CD8-positive, alpha-beta T cell (primary cell): ENCODE measurements at regions of chr1 and their contacts with region 1.

Region 1: GRCh38 chr1:114511032-114511785 is at the start of gene TRIM33:
- DNase-seq: peak; percentile 84 to 98 (median 91)
- ATAC-seq: peak; percentile 80
- H3K4me3 ChIP-seq: peak within 1 kb of the TSS; percentile 78 to 96
- H3K4me3 Mint-ChIP-seq: peak within 1 kb of the TSS; percentile 96
- H3K27ac ChIP-seq: peak within 1 kb of the TSS; percentile 93 to 100
- H3K27ac Mint-ChIP-seq: peak within 1 kb of the TSS; percentile 99
- H3K4me1 ChIP-seq: peaks cover 40% of the 10 kb centered on the region
- H3K4me1 Mint-ChIP-seq: peaks cover 54% of the 10 kb centered on the region
- H3K27me3 ChIP-seq: no peaks in the 10 kb centered on the region
- H3K27me3 Mint-ChIP-seq: no peaks in the 10 kb centered on the region
- CTCF ChIP-seq: no peak
- total RNA-seq, gene TRIM33: 50.4 to 50.7 TPM

Region 2: DNA sequence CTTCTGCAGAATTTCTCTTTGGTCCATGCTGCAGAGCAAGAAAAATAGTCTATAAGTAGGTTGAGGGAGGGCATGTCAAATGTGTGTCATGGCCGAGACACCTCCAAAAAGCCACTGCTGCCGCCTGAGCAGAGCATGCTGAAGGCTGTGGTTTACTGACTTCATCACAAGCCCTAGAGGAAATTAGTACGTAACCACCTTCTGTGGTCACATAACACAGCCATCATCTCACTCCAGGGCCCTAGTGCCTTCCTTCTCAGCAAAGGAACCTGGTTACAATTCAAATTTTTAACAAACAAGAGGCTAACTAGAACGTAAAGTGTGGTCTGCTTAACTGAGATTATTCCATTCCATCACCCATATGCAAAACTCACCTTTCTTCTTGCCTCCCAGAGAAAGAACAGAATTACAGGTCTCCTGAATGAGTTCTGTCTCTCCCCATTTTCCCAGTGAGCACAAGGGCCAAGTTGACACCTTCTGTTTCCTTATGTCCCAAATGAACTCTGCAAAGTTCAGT is 639.6 kb before region 1 on chr1 and contains the start of gene PTPN22:
- CTCF ChIA-PET with region 1: no interaction called
- POLR2A ChIA-PET with region 1: no interaction called
- intact Hi-C with region 1: loop called in 1 of 2 experiments (anchors 2 kb)
- DNase-seq: peak; percentile 64 to 96 (median 80)
- ATAC-seq: peak; percentile 84
- H3K4me3 ChIP-seq: peak within 1 kb of the TSS; percentile 53 to 66
- H3K4me3 Mint-ChIP-seq: peak within 1 kb of the TSS; percentile 83
- H3K27ac ChIP-seq: peak within 1 kb of the TSS; percentile 79 to 82
- H3K27ac Mint-ChIP-seq: peak within 1 kb of the TSS; percentile 98
- H3K4me1 ChIP-seq: peaks cover 65% of the 10 kb centered on the region
- H3K4me1 Mint-ChIP-seq: peaks cover 81% of the 10 kb centered on the region
- H3K27me3 ChIP-seq: no peaks in the 10 kb centered on the region
- H3K27me3 Mint-ChIP-seq: no peaks in the 10 kb centered on the region
- CTCF ChIP-seq: no peak
- total RNA-seq, gene PTPN22: 48.6 to 52.4 TPM

Region 3: DNA sequence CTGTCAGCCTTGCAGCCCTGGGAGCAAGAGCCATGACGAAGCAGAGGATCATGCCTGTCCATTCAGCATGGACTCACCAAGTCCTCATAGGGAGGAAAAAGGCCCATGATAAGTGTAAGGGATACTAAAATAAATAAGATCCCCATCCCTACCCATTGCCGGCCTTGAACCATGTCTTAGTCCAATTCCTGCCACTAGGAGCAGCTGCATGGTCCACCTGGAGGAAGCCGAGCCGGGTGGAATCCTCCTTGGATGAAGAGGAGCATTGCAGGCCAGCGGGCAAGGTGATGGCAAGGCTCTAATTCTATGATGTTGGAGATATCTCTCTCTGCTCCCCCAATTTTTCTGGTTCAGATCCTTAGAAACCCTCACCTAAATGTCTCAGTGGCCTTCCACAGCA is 318.9 kb before region 1 on chr1:
- CTCF ChIA-PET with region 1: no interaction called
- POLR2A ChIA-PET with region 1: no interaction called
- intact Hi-C with region 1: no loop called
- DNase-seq: no peak
- ATAC-seq: no peak
- H3K4me3 ChIP-seq: no peak overlapping the region
- H3K4me3 Mint-ChIP-seq: no peak overlapping the region
- H3K27ac ChIP-seq: no peak overlapping the region
- H3K27ac Mint-ChIP-seq: no peak overlapping the region
- H3K4me1 ChIP-seq: no peaks in the 10 kb centered on the region
- H3K4me1 Mint-ChIP-seq: peaks cover 3% of the 10 kb centered on the region
- H3K27me3 ChIP-seq: peaks cover 0 to 3% of the 10 kb centered on the region in 2 experiments
- H3K27me3 Mint-ChIP-seq: peaks cover 37% of the 10 kb centered on the region
- CTCF ChIP-seq: no peak

Region 4: GRCh38 chr1:114581335-114582287 is 70.4 kb after region 1 on chr1 and contains the start of gene BCAS2:
- CTCF ChIA-PET with region 1: no interaction called
- POLR2A ChIA-PET with region 1: interaction called, 16 read pairs
- intact Hi-C with region 1: loop called (anchors 1 kb)
- DNase-seq: peak; percentile 90 to 99 (median 95)
- ATAC-seq: peak; percentile 95
- H3K4me3 ChIP-seq: peak within 1 kb of the TSS; percentile 56 to 72
- H3K4me3 Mint-ChIP-seq: peak within 1 kb of the TSS; percentile 96
- H3K27ac ChIP-seq: peak within 1 kb of the TSS; percentile 84 to 94
- H3K27ac Mint-ChIP-seq: peak within 1 kb of the TSS; percentile 99
- H3K4me1 ChIP-seq: peaks cover 22% of the 10 kb centered on the region
- H3K4me1 Mint-ChIP-seq: peaks cover 46% of the 10 kb centered on the region
- H3K27me3 ChIP-seq: no peaks in the 10 kb centered on the region
- H3K27me3 Mint-ChIP-seq: no peaks in the 10 kb centered on the region
- CTCF ChIP-seq: no peak
- total RNA-seq, gene BCAS2: 113 to 125 TPM

Region 5: DNA sequence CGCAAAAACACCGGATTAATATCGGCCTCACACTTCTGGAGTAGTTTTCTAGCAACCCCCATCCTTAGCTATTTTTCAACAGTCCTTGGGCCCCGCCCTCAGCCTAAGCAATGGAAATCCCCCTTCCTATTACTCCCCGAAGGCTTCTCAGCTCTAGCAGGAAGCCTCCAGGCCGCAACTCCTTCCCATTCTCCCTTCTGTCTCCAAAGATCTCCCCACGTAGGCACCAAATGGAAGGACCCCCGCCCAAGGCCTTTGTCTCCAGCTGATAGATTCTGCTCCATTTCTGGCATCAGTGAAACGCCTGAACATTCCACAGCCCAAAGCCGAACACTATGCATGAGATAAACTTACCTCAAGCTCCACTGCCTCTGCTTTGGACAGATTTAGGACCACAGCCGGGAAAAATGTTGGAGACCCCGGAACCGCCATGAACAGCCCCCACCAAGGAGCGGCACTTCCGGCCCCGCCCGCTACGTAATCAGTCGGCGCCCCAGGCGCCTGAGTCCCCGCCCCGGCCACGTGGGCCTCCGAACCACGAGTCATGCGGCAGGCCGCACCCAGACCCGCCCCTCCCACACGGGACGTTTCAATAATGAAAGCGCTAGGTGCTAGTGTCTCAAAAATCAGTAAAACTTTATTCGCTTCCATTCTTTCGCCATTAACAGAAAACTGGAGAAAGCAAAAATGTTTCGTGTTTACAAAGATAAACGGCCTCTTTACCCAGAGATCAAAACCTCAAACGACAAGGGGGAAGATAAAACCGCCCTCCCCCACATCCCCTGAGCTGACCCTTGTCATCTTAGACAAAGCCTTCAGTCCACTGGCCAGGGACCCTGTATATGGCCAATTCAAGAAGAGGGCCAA is 205.3 kb after region 1 on chr1 and contains the start of gene NRAS:
- CTCF ChIA-PET with region 1: no interaction called
- POLR2A ChIA-PET with region 1: interaction called, 6 read pairs
- intact Hi-C with region 1: loop called (anchors 1 kb)
- DNase-seq: peak; percentile 91 to 97 (median 97)
- ATAC-seq: peak; percentile 94
- H3K4me3 ChIP-seq: peak within 1 kb of the TSS; percentile 84 to 87
- H3K4me3 Mint-ChIP-seq: peak within 1 kb of the TSS; percentile 97
- H3K27ac ChIP-seq: peak within 1 kb of the TSS; percentile 94 to 99
- H3K27ac Mint-ChIP-seq: peak within 1 kb of the TSS; percentile 100
- H3K4me1 ChIP-seq: peaks cover 16% of the 10 kb centered on the region
- H3K4me1 Mint-ChIP-seq: peaks cover 34% of the 10 kb centered on the region
- H3K27me3 ChIP-seq: no peaks in the 10 kb centered on the region
- H3K27me3 Mint-ChIP-seq: no peaks in the 10 kb centered on the region
- CTCF ChIP-seq: no peak
- total RNA-seq, gene NRAS: 46.0 to 46.4 TPM

Region 6: GRCh38 chr1:114780344-114781226 is 269.4 kb after region 1 on chr1 and contains the start of gene SIKE1:
- CTCF ChIA-PET with region 1: no interaction called
- POLR2A ChIA-PET with region 1: no interaction called
- intact Hi-C with region 1: loop called in 1 of 2 experiments (anchors 2 kb)
- DNase-seq: peak; percentile 87 to 98 (median 94)
- ATAC-seq: peak; percentile 97
- H3K4me3 ChIP-seq: peak within 1 kb of the TSS; percentile 86 to 92
- H3K4me3 Mint-ChIP-seq: peak within 1 kb of the TSS; percentile 100
- H3K27ac ChIP-seq: peak within 1 kb of the TSS; percentile 91 to 93
- H3K27ac Mint-ChIP-seq: peak within 1 kb of the TSS; percentile 99
- H3K4me1 ChIP-seq: peaks cover 15% of the 10 kb centered on the region
- H3K4me1 Mint-ChIP-seq: peaks cover 35% of the 10 kb centered on the region
- H3K27me3 ChIP-seq: no peaks in the 10 kb centered on the region
- H3K27me3 Mint-ChIP-seq: no peaks in the 10 kb centered on the region
- CTCF ChIP-seq: no peak
- total RNA-seq, gene SIKE1: 64.4 to 66.6 TPM

Region 7: DNA sequence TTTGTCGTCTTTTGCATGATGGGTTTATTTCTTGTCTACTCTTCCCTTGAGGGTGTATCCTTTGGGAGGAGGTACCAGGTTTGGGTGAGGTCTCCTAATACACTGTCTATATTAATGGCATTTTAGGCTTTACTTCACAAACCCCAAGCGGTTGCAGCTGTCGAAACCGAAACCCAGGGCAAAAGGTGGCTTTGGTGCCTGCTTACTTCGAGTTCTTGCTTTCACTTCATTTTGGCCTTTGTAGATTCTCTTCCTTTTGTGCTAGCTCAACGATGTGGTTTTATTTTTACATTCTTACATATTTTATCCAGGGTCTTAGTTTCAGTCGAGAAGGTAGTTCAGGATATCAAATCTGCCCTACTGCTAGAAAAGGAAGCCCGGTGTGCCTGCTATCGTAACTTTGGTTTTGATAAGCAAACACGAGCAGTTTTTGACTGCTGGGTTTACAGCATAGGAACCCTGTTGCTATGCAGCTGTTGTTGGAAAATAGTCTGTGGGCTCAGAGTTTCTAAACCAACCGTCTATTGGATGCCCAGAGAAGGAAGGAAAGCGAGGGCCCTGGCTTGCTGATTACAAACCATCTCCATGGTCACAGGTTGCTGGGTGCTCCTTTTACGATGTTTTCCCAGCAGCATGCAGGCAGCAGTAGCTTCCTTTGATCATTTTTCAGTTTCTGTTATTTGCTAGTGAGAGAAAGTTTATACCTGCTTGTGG is 587.9 kb after region 1 on chr1:
- CTCF ChIA-PET with region 1: no interaction called
- POLR2A ChIA-PET with region 1: no interaction called
- intact Hi-C with region 1: loop called (anchors 2 to 10 kb)
- DNase-seq: peak; percentile 55 to 96 (median 74)
- ATAC-seq: peak; percentile 89
- H3K4me3 ChIP-seq: peak overlapping the region; percentile 51 to 56
- H3K4me3 Mint-ChIP-seq: peak overlapping the region; percentile 86
- H3K27ac ChIP-seq: peak overlapping the region; percentile 95
- H3K27ac Mint-ChIP-seq: peak overlapping the region; percentile 97
- H3K4me1 ChIP-seq: peaks cover 27% of the 10 kb centered on the region
- H3K4me1 Mint-ChIP-seq: peaks cover 36% of the 10 kb centered on the region
- H3K27me3 ChIP-seq: no peaks in the 10 kb centered on the region
- H3K27me3 Mint-ChIP-seq: no peaks in the 10 kb centered on the region
- CTCF ChIP-seq: no peak